Naive thymus-derived CD8-positive, alpha-beta T cell (primary cell): ENCODE measurements at regions of chr17 and their contacts with region 1.

Region 1: DNA sequence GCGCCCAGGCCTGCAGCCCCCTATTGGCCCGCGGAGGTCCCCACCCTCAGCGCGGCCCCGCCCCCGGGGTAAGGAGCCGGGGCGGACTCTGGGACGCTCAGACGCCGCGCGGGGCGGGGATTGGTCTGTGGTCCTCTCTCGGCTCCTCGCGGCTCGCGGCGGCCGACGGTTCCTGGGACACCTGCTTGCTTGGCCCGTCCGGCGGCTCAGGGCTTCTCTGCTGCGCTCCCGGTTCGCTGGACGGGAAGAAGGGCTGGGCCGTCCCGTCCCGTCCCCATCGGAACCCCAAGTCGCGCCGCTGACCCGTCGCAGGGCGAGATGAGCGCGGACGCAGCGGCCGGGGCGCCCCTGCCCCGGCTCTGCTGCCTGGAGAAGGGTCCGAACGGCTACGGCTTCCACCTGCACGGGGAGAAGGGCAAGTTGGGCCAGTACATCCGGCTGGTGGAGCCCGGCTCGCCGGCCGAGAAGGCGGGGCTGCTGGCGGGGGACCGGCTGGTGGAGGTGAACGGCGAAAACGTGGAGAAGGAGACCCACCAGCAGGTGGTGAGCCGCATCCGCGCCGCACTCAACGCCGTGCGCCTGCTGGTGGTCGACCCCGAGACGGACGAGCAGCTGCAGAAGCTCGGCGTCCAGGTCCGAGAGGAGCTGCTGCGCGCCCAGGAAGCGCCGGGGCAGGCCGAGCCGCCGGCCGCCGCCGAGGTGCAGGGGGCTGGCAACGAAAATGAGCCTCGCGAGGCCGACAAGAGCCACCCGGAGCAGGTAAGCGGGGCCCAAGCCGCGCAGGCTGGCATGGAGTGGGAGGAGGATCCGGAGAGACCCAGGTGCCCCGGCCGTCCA is at the start of gene NHERF1:
- DNase-seq: peak; percentile 87 to 94 (median 92)
- ATAC-seq: peak; percentile 82 to 84
- H3K4me3 Mint-ChIP-seq: peak within 1 kb of the TSS; percentile 92 to 100 (median 98)
- H3K27ac Mint-ChIP-seq: peak within 1 kb of the TSS; percentile 87 to 97 (median 94)
- H3K4me1 Mint-ChIP-seq: peaks cover 42 to 78% (median 71%) of the 10 kb centered on the region in 4 donors
- H3K27me3 Mint-ChIP-seq: no peaks in the 10 kb centered on the region
- polyA plus RNA-seq, gene NHERF1: 277 to 351 (median 324) TPM

Region 2: GRCh38 chr17:74759243-74759801 is 10.6 kb after region 1 on chr17:
- POLR2A ChIA-PET with region 1: interaction called, 161 read pairs
- DNase-seq: peak in 8 of 10 donors; percentile 34 to 74 (median 56)
- ATAC-seq: peak; percentile 91 to 92
- H3K4me3 Mint-ChIP-seq: peak overlapping the region; percentile 69 to 97 (median 84)
- H3K27ac Mint-ChIP-seq: peak overlapping the region; percentile 88 to 94 (median 92)
- H3K4me1 Mint-ChIP-seq: peaks cover 30 to 81% (median 71%) of the 10 kb centered on the region in 4 donors
- H3K27me3 Mint-ChIP-seq: no peaks in the 10 kb centered on the region

Region 3: GRCh38 chr17:74770498-74771318 is 22.0 kb after region 1 on chr17:
- POLR2A ChIA-PET with region 1: interaction called, 231 read pairs
- DNase-seq: peak; percentile 60 to 88 (median 72)
- ATAC-seq: peak; percentile 93 to 96
- H3K4me3 Mint-ChIP-seq: peak overlapping the region in 2 of 10 donors; percentile 2 to 14
- H3K27ac Mint-ChIP-seq: peak overlapping the region; percentile 43 to 91 (median 84)
- H3K4me1 Mint-ChIP-seq: peaks cover 30 to 41% (median 36%) of the 10 kb centered on the region in 4 donors
- H3K27me3 Mint-ChIP-seq: no peaks in the 10 kb centered on the region

Region 4: GRCh38 chr17:74790161-74791054 is 41.7 kb after region 1 on chr17:
- POLR2A ChIA-PET with region 1: interaction called, 23 read pairs
- DNase-seq: no peak
- ATAC-seq: peak; percentile 23 to 45
- H3K4me3 Mint-ChIP-seq: peak overlapping the region in 9 of 10 donors; percentile 19 to 73 (median 62)
- H3K27ac Mint-ChIP-seq: peak overlapping the region; percentile 53 to 85 (median 74)
- H3K4me1 Mint-ChIP-seq: peaks cover 18 to 51% (median 38%) of the 10 kb centered on the region in 4 donors
- H3K27me3 Mint-ChIP-seq: no peaks in the 10 kb centered on the region